RWPE1 (cell line): ENCODE measurements at regions of chr10 and their contacts with region 1.

Region 1: DNA sequence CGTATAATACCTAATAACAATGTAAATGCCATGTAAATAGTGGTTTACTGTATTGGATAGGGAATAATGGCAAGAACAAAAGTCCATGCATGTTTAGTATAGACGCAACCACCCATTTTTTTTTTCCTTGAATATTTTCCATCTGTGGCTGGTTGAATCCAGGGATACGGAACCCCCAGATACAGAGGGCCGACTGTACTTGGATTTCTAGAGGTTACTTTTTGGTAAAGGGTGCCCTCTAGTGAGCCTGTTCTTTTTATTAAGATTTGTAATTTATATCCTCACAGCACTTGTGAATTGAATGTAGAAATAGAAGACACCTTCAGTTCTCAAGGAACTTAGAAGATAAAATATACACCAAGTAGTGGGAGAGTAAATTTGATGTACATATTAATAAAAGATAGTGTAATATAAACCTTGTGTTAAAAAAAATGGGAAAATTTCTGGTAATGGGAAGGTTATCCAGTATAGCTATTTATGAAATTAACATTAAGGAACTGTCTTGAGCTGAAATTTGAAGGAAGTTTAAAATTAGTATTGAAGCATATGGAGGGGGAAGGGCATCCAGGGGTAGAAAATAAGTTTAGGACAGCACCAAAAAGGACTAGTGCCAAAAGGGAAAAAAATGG is 32.0 kb downstream of the EXOC6 start:
- DNase-seq: peak; percentile 39
- H3K27ac ChIP-seq: no peak overlapping the region
- CTCF ChIP-seq: peak; percentile 48; the same call in 1 of the 2 replicates

Region 2: GRCh38 chr10:92773776-92774175 is 106.6 kb before region 1 on chr10:
- CTCF ChIA-PET with region 1: interaction called, 12 read pairs
- POLR2A ChIA-PET with region 1: no interaction called
- DNase-seq: no peak
- H3K27ac ChIP-seq: no peak overlapping the region
- CTCF ChIP-seq: no peak

Region 3: DNA sequence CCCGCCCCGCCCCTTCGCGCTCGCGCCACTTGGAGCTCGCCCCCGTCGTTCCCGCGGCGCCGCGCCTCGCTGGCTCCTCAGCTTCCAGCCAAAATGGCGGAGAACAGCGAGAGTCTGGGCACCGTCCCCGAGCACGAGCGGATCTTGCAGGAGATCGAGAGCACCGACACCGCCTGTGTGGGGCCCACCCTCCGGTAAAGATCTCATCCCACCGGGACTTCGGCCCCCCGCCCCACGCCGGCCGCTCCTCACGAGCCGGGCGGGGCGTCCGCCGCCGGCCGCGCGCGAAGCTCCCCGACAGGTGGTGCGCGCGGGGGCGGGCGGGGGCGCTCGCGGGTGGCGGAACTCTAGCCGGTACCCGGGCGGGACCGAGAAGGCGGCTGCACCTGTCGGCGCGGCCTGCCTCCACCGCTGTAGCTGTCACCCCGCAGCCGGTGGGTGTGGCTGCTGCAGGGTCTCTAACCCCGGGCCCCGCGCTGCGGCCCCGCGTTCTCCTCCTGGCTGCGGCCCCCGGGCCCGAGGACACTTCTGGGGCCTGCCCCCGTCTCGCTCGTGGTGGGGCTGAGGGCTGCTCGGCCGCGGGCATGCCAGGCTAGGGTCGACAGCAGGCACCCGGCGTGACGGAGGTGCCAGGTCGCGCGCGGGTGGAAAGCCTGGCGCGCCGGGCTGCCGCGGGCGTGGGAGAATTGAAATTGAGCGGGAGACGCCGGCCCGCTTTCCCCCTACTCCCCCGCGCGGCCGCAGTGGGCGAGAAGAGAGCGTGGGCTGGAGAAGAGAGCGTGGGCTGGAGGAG is 31.7 kb before region 1 on chr10 and contains the start of gene EXOC6:
- CTCF ChIA-PET with region 1: interaction called, 13 read pairs
- POLR2A ChIA-PET with region 1: no interaction called
- DNase-seq: peak; percentile 85
- H3K27ac ChIP-seq: peak within 1 kb of the TSS; percentile 55
- CTCF ChIP-seq: peak; percentile 20; the same call in 1 of the 2 replicates